WTC11 (cell line): ENCODE measurements at regions of chr5 and their contacts with region 1.

Region 1: GRCh38 chr5:431001-431710 is 11.8 kb upstream of the EXOC3 start:
- DNase-seq: peak; percentile 90
- ATAC-seq: peak; percentile 97
- H3K4me3 Mint-ChIP-seq: no peak overlapping the region
- H3K27ac Mint-ChIP-seq: peak overlapping the region; percentile 60; the same call in 1 of the 2 replicates
- H3K4me1 Mint-ChIP-seq: peaks cover 4% of the 10 kb centered on the region; the same call in 1 of the 2 replicates
- H3K27me3 Mint-ChIP-seq: no peaks in the 10 kb centered on the region
- CTCF ChIP-seq: peak; percentile 77

Region 2: GRCh38 chr5:368183-369084 is 62.7 kb before region 1 on chr5:
- CTCF ChIA-PET with region 1: interaction called, 10 read pairs
- POLR2A ChIA-PET with region 1: no interaction called
- DNase-seq: peak; percentile 8
- ATAC-seq: no peak
- H3K4me3 Mint-ChIP-seq: no peak overlapping the region
- H3K27ac Mint-ChIP-seq: no peak overlapping the region
- H3K4me1 Mint-ChIP-seq: no peaks in the 10 kb centered on the region; the same call in 1 of the 2 replicates
- H3K27me3 Mint-ChIP-seq: no peaks in the 10 kb centered on the region
- CTCF ChIP-seq: no peak

Region 3: GRCh38 chr5:404666-405241 is 26.4 kb before region 1 on chr5:
- CTCF ChIA-PET with region 1: interaction called, 15 read pairs
- POLR2A ChIA-PET with region 1: no interaction called
- DNase-seq: no peak
- ATAC-seq: no peak
- H3K4me3 Mint-ChIP-seq: no peak overlapping the region
- H3K27ac Mint-ChIP-seq: no peak overlapping the region
- H3K4me1 Mint-ChIP-seq: peaks cover 9% of the 10 kb centered on the region
- H3K27me3 Mint-ChIP-seq: peaks cover 13% of the 10 kb centered on the region
- CTCF ChIP-seq: no peak

Region 4: GRCh38 chr5:418681-419121 is 12.5 kb before region 1 on chr5:
- CTCF ChIA-PET with region 1: interaction called, 73 read pairs
- POLR2A ChIA-PET with region 1: interaction called, 3 read pairs
- DNase-seq: peak; percentile 17
- ATAC-seq: no peak
- H3K4me3 Mint-ChIP-seq: no peak overlapping the region
- H3K27ac Mint-ChIP-seq: no peak overlapping the region
- H3K4me1 Mint-ChIP-seq: peaks cover 18% of the 10 kb centered on the region
- H3K27me3 Mint-ChIP-seq: no peaks in the 10 kb centered on the region; the same call in 1 of the 2 replicates
- CTCF ChIP-seq: no peak